Gastrocnemius medialis (tissue), 4 donors: ENCODE measurements at regions of chr5 and their contacts with region 1.

Region 1: GRCh38 chr5:59390074-59390659 is 503.4 kb downstream of the PDE4D start:
- DNase-seq: no peak
- ATAC-seq: no peak
- H3K4me3 ChIP-seq: no peak overlapping the region
- H3K27ac ChIP-seq: peak overlapping the region in 2 of 4 donors; percentile 33 to 43
- H3K4me1 ChIP-seq: peaks cover 6 to 20% of the 10 kb centered on the region in 2 donors
- H3K27me3 ChIP-seq: no peaks in the 10 kb centered on the region
- CTCF ChIP-seq: peak; percentile 51 to 74 (median 70)
- POLR2A ChIP-seq: no peak

Region 2: DNA sequence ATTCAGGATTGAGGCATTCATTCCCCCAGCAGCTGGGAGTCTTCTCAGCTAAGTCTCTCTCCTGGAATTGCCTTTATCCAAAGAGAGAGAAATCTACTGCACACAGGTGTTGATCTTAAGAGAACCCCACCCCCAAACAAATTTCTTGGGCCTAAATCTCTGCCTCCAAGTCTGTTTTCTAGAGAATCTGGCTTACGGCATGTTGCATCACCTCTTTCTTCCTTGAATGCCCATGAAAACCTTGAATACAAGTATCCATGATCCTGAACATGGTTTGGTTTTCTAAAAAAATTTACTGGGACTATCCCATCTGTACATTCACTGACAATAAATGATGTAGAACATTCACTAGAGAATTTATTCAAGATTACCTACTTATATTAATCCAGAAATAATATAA is 101.8 kb after region 1 on chr5:
- in situ Hi-C with region 1: no loop called
- intact Hi-C with region 1: loop called (anchors 5 kb)
- DNase-seq: no peak
- ATAC-seq: no peak
- H3K4me3 ChIP-seq: no peak overlapping the region
- H3K27ac ChIP-seq: no peak overlapping the region
- H3K4me1 ChIP-seq: peaks cover 25 to 49% of the 10 kb centered on the region in 2 donors
- H3K27me3 ChIP-seq: no peaks in the 10 kb centered on the region
- CTCF ChIP-seq: no peak
- POLR2A ChIP-seq: no peak

Region 3: GRCh38 chr5:59666440-59667068 is 276.4 kb after region 1 on chr5:
- in situ Hi-C with region 1: loop called (anchors 5 kb)
- intact Hi-C with region 1: loop called (anchors 2 kb)
- DNase-seq: no peak
- ATAC-seq: peak; percentile 74 to 76
- H3K4me3 ChIP-seq: no peak overlapping the region
- H3K27ac ChIP-seq: peak overlapping the region; percentile 69 to 82 (median 80)
- H3K4me1 ChIP-seq: peaks cover 35 to 42% of the 10 kb centered on the region in 2 donors
- H3K27me3 ChIP-seq: no peaks in the 10 kb centered on the region
- CTCF ChIP-seq: peak in 4 of 5 experiments; percentile 29 to 55 (median 45)
- POLR2A ChIP-seq: no peak

Region 4: DNA sequence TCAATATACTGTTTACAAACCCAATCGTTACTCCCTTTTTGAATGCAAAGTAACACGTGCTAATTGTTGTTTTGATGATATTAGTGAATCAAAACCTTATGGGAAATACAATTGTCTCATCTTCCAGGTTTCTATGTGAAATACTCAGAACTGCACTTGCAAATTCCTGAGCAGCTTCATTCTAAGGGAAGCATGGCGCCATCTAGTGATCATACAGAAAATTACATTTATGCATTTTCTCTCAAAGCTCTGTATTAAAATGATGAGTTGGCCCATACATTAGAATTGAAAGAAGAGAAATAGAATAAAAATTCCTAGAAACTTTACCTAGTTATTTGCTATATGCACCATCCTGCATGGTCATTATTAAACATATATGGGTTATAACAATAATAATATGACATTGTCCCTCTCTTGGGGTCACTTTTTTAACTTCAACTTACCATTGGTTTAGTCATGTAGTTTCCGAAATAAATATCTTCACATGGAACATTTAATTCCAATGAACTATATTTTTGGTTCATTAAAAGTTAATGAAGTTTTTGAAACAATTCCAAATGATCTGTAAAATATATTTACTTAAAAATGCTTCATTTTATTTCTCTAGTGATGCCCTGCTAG is 283.4 kb after region 1 on chr5:
- in situ Hi-C with region 1: loop called in 3 of 4 experiments (anchors 5 kb)
- intact Hi-C with region 1: loop called (anchors 1 kb)
- DNase-seq: no peak
- ATAC-seq: peak; percentile 43 to 60
- H3K4me3 ChIP-seq: no peak overlapping the region
- H3K27ac ChIP-seq: no peak overlapping the region
- H3K4me1 ChIP-seq: peaks cover 6% of the 10 kb centered on the region in 2 donors
- H3K27me3 ChIP-seq: no peaks in the 10 kb centered on the region
- CTCF ChIP-seq: peak; percentile 73 to 82 (median 77)
- POLR2A ChIP-seq: no peak

Region 5: GRCh38 chr5:59724482-59725391 is 334.6 kb after region 1 on chr5:
- in situ Hi-C with region 1: no loop called
- intact Hi-C with region 1: loop called (anchors 1 kb)
- DNase-seq: no peak
- ATAC-seq: peak in 1 of 2 donors; percentile 72
- H3K4me3 ChIP-seq: no peak overlapping the region
- H3K27ac ChIP-seq: no peak overlapping the region
- H3K4me1 ChIP-seq: no peaks in the 10 kb centered on the region
- H3K27me3 ChIP-seq: no peaks in the 10 kb centered on the region
- CTCF ChIP-seq: peak in 4 of 5 experiments; percentile 7 to 66 (median 48)
- POLR2A ChIP-seq: no peak